Activated T-helper 1 cell treated with anti-CD3 and anti-CD28 coated beads, Interleukin-12 subunit alpha, Interleukin-12 subunit beta, Interleukin-2, Interleukin-4 antibody, amounts not matched to agents 30 ng/mL and 10 ng/mL and 1 ng/mL, durations not matched to agents 14 hours and 24 hours and 36 hours (primary cell): ENCODE measurements at regions of chr17 and their contacts with region 1.

Region 1: GRCh38 chr17:67366193-67367157 is at the start of gene PSMD12:
- DNase-seq: peak; percentile 92
- H3K4me3 Mint-ChIP-seq: peak within 1 kb of the TSS; percentile 96
- H3K27ac Mint-ChIP-seq: peak within 1 kb of the TSS; percentile 94
- H3K4me1 Mint-ChIP-seq: peaks cover 52% of the 10 kb centered on the region
- H3K27me3 Mint-ChIP-seq: no peaks in the 10 kb centered on the region
- total RNA-seq, gene PSMD12: 87.4 TPM in 2 replicates

Region 2: GRCh38 chr17:67326441-67326840 is 40.0 kb before region 1 on chr17:
- intact Hi-C with region 1: no loop called
- DNase-seq: no peak
- H3K4me3 Mint-ChIP-seq: no peak overlapping the region
- H3K27ac Mint-ChIP-seq: no peak overlapping the region
- H3K4me1 Mint-ChIP-seq: no peaks in the 10 kb centered on the region
- H3K27me3 Mint-ChIP-seq: peaks cover 1% of the 10 kb centered on the region

Region 3: DNA sequence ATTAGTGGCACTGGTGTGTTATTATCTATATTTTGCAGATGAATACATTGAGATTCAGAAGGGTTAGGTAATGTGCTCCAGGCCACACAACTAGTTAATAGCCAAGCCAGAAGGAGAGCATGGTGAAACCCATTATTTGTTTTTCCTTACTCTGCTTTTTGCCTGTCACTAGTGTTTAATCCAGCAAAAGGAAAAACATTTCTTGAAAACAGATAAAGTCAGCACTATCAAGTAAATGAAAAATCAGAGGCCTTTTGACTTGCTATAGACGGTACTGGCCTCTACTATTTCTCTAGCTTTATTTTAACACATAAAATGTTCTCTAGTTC is 15.4 kb after region 1 on chr17:
- intact Hi-C with region 1: no loop called
- DNase-seq: no peak
- H3K4me3 Mint-ChIP-seq: no peak overlapping the region
- H3K27ac Mint-ChIP-seq: no peak overlapping the region
- H3K4me1 Mint-ChIP-seq: peaks cover 24% of the 10 kb centered on the region
- H3K27me3 Mint-ChIP-seq: no peaks in the 10 kb centered on the region

Region 4: GRCh38 chr17:67431249-67432048 is 65.0 kb after region 1 on chr17:
- intact Hi-C with region 1: loop called (anchors 1 kb)
- DNase-seq: no peak
- H3K4me3 Mint-ChIP-seq: peak overlapping the region; percentile 46
- H3K27ac Mint-ChIP-seq: peak overlapping the region; percentile 85
- H3K4me1 Mint-ChIP-seq: peaks cover 51% of the 10 kb centered on the region
- H3K27me3 Mint-ChIP-seq: no peaks in the 10 kb centered on the region

Region 5: GRCh38 chr17:67544364-67544955 is 178.0 kb after region 1 on chr17:
- intact Hi-C with region 1: no loop called
- DNase-seq: no peak
- H3K4me3 Mint-ChIP-seq: no peak overlapping the region
- H3K27ac Mint-ChIP-seq: no peak overlapping the region
- H3K4me1 Mint-ChIP-seq: peaks cover 2% of the 10 kb centered on the region
- H3K27me3 Mint-ChIP-seq: no peaks in the 10 kb centered on the region

Region 6: GRCh38 chr17:67717624-67718329 is 351.3 kb after region 1 on chr17 and contains the start of gene NOL11:
- intact Hi-C with region 1: loop called (anchors 1 kb)
- DNase-seq: peak; percentile 99
- H3K4me3 Mint-ChIP-seq: peak within 1 kb of the TSS; percentile 99
- H3K27ac Mint-ChIP-seq: peak within 1 kb of the TSS; percentile 99
- H3K4me1 Mint-ChIP-seq: peaks cover 16% of the 10 kb centered on the region
- H3K27me3 Mint-ChIP-seq: peaks cover 4% of the 10 kb centered on the region
- total RNA-seq, gene NOL11: 107 and 118 TPM in 2 replicates

Region 7: DNA sequence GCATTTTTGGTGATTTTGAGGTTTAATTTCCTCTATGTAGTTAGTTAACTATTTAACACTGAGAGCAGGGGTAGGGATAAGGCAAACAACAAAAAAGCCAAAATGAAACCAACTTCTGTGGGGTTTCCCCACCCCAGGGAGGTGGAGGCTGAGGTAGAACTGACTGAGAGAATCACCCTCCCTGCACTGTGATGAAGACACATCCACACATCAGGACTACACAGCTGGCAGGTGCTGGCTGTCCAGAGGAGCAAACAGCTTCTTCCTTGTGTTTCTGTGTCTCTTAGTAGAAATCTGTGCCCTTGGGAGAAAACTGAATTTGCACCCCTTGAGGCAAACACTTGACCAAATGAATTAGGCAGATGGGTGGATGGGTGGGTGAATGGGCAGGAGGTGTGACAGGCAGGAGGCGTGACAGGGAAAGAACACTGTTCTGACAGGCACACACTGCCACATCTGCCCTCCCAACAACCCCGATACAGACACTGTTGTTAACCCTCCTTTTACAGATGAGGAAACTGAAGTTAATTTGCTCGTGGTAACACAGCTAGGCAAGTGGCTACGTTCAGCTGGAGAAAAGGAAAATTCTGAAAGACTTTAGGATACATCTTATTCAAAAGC is 818.5 kb after region 1 on chr17:
- intact Hi-C with region 1: loop called (anchors 10 kb)
- DNase-seq: peak; percentile 70
- H3K4me3 Mint-ChIP-seq: peak overlapping the region; percentile 51
- H3K27ac Mint-ChIP-seq: peak overlapping the region; percentile 53
- H3K4me1 Mint-ChIP-seq: peaks cover 57% of the 10 kb centered on the region
- H3K27me3 Mint-ChIP-seq: peaks cover 10% of the 10 kb centered on the region